Dorsolateral prefrontal cortex (tissue), 120 donors: ENCODE measurements at regions of chr20 and their contacts with region 1.

Region 1: GRCh38 chr20:15913391-15914025 is 659.7 kb downstream of the KIF16B start:
- DNase-seq: no peak
- H3K4me3 ChIP-seq: no peak overlapping the region
- H3K27ac ChIP-seq: no peak overlapping the region
- H3K27me3 ChIP-seq: no peaks in the 10 kb centered on the region
- CTCF ChIP-seq: no peak

Region 2: DNA sequence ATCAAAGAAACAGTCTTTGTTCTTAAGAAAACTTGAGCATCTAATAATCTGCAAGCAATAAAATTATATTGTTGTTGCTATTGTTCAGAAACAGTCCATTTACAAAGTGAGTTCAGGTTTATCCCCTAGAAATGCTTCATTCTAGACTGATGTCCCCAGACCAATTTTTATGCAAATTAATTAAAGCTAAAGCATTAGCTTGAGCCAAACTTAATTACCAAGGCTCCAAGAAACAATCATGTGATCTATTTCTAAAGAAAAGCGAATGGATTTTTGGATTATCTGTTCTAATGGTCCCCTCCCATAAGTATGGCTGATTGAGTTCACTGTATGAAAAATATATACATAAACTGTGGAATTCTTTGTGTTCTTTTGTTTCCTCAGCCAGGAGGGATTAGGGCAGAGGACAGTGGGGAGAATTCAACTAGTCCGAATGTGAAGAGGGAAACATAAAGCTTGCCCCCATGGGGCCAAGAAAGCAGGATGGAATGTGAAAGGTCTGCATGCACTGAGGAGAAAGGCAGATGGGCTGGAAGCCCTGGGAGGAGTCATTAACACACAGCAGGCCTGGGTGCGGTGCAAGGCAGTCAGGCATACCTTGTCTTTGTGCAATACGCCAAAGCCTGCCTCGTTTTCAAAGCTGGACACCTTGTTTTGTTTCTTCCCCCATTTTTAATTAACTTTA is 62.7 kb after region 1 on chr20:
- intact Hi-C with region 1: loop called in 1 of 2 experiments (anchors 10 kb)
- DNase-seq: peak in 1 of 10 donors; percentile 37
- H3K4me3 ChIP-seq: no peak overlapping the region
- H3K27ac ChIP-seq: no peak overlapping the region
- H3K27me3 ChIP-seq: no peaks in the 10 kb centered on the region
- CTCF ChIP-seq: no peak